GM10248 (cell line): ENCODE measurements at regions of chr9 and their contacts with region 1.

Region 1: DNA sequence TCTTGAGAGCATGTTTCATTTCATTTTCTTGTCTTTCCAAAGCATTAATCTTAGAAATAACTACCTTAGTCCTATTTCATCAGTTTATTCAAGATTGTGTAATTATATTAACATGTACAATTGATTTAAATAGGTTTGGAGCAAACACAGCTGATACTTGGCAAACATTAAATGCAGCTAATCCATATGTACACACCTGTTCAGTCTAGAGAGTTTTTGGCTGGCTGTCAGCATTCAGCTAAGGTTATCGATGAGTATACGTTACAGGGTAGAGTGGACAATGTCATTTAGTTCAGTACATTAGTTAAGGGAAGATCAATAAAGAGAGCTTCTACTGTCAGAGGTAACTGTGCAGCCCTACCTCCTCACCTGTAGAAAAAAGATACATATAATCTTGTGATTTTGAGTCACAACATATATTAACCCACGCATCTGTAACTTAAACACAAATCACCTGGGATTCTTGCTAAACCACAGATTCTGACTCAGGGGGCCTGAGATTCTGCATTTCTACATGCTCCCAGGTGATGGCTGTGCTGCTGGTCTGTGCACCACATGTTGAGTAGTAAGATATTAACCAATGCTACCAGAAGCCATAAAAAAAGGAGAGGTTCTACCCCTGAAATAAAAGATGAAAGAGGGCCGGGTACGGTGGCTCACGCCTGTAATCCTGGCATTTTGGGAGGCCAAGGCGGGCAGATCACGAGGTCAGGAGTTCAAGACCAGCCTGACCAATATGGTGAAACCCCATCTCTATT is 34.1 kb upstream of the PCA3 start:
- DNase-seq: no peak
- CTCF ChIP-seq: no peak

Region 2: DNA sequence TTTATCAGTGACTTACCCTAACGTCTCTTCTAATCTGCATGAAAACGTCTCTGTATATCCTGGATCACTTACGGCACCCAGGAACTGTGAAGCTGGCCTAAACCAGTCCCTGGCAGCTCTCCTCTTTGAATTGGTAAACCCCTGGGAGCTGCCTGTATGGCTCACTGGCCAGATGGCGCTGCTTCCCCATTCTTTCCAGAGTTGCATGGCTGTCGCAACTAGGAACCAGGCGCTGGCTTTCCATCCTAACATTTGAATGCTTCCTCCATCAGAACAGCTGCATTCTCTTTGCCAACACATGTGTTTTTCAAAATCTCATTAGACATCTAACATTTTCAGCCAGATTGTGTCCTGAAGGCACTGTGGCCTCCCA is 26.1 kb after region 1 on chr9:
- CTCF ChIA-PET with region 1: interaction called, 11 read pairs
- POLR2A ChIA-PET with region 1: no interaction called
- DNase-seq: no peak
- CTCF ChIP-seq: peak; percentile 10

Region 3: DNA sequence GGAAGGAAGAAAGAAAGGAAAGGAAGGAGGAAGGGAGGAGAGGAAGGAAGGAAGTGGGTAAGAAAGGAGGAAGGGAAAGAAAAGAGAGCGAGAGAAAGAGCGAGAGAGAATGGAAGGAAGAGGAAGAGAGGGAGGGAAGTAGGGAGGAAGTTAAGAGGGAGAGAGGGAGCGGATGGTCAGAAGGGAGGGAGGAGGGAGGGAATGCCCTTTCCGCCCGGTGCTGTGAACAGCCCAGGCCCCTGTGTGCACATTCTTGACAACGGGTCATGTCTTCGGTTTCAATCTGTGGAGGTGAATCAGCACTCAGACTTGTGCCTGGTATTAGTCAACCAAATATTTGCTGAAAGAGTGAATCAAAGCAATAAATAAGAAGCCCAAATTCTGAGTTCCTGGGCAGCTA is 136.5 kb after region 1 on chr9:
- CTCF ChIA-PET with region 1: no interaction called
- POLR2A ChIA-PET with region 1: no interaction called
- DNase-seq: no peak
- CTCF ChIP-seq: no peak